ENCODE measurements at regions of chr17 and their contacts with region 1.

Region 1: DNA sequence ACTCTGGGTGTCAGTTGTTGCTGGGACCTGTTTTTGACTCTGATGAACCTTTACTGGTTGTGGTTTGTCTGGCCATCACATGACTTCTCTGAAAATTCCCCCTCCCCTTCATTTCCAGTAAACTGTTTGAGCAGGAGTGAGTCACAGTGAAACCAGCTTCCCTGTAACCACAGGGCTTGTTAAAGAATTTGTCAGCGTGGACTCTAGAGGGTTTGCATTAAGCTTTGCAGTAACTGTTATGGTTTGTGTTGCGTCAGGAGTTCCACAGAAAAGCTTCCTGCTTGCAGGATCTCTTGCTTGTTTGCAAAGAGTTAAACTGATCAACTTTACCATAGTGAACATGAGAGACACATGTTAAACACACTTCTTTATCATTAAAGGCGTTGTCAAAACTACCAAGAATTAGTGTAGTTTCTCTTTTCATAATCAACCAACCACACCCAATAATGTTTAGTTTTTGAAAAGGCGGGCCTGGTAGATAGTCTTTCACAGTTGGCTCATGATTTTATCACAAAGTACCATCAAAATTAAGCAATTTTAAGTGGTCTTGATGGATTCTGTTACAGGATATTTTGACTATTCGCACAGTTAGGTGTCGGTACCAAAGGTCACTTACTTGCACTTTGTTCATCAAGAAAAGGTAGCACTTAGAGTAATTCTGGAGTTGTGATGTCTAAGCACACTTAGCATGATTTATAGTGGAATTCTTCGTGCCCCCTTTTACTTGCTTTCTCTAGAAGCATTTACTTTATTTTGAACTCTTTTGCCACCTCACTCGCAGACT is 79.3 kb downstream of the VMP1 start:
- DNase-seq: peak; percentile 93
- H3K4me3 Mint-ChIP-seq: peak overlapping the region; percentile 64
- H3K27ac Mint-ChIP-seq: peak overlapping the region; percentile 100
- H3K4me1 Mint-ChIP-seq: peaks cover 60% of the 10 kb centered on the region
- H3K27me3 Mint-ChIP-seq: no peaks in the 10 kb centered on the region

Region 2: GRCh38 chr17:58344047-58344790 is 1442.5 kb before region 1 on chr17:
- CTCF ChIA-PET with region 1: no interaction called
- intact Hi-C with region 1: loop called (anchors 1 kb)
- DNase-seq: peak; percentile 98
- H3K4me3 Mint-ChIP-seq: peak overlapping the region; percentile 92
- H3K27ac Mint-ChIP-seq: peak overlapping the region; percentile 99
- H3K4me1 Mint-ChIP-seq: peaks cover 60% of the 10 kb centered on the region
- H3K27me3 Mint-ChIP-seq: no peaks in the 10 kb centered on the region

Region 3: GRCh38 chr17:59800530-59800942 is 13.8 kb after region 1 on chr17:
- CTCF ChIA-PET with region 1: interaction called, 3 read pairs
- intact Hi-C with region 1: loop called (anchors 1 kb)
- DNase-seq: no peak
- H3K4me3 Mint-ChIP-seq: no peak overlapping the region
- H3K27ac Mint-ChIP-seq: no peak overlapping the region
- H3K4me1 Mint-ChIP-seq: peaks cover 42% of the 10 kb centered on the region
- H3K27me3 Mint-ChIP-seq: no peaks in the 10 kb centered on the region

Region 4: GRCh38 chr17:59837308-59838051 is 50.8 kb after region 1 on chr17:
- CTCF ChIA-PET with region 1: interaction called, 13 read pairs
- intact Hi-C with region 1: no loop called
- DNase-seq: peak; percentile 81
- H3K4me3 Mint-ChIP-seq: peak overlapping the region; percentile 100
- H3K27ac Mint-ChIP-seq: peak overlapping the region; percentile 100
- H3K4me1 Mint-ChIP-seq: peaks cover 56% of the 10 kb centered on the region
- H3K27me3 Mint-ChIP-seq: peaks cover 8% of the 10 kb centered on the region

Region 5: GRCh38 chr17:59941131-59941530 is 154.4 kb after region 1 on chr17:
- CTCF ChIA-PET with region 1: no interaction called
- intact Hi-C with region 1: loop called (anchors 1 kb)
- DNase-seq: peak; percentile 38
- H3K4me3 Mint-ChIP-seq: peak overlapping the region; percentile 39
- H3K27ac Mint-ChIP-seq: peak overlapping the region; percentile 98
- H3K4me1 Mint-ChIP-seq: peaks cover 59% of the 10 kb centered on the region
- H3K27me3 Mint-ChIP-seq: no peaks in the 10 kb centered on the region